ENCODE measurements at regions of chr7 and their contacts with region 1.

Region 1: DNA sequence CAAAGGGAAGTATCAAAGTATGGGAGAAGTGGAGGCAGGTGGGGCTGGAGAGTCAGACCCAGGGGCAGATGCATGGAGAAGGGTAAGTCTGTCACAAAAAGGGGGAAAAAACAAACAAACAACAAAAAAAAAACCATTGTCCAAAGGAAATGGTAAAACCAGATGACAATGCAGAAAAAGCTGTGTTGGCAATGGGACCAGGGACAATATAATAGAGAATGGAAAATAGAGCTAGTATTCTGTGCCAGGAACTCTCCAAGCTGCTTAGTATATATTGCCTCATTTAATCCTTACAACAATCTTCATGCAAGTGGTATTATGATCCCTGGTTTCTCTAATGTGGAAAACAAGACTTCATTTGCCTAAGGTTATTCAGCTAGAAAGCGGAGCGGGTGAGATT is 13.1 kb upstream of the KDM7A start:
- DNase-seq: no peak
- ATAC-seq: no peak
- H3K4me3 ChIP-seq: no peak overlapping the region
- H3K27ac ChIP-seq: no peak overlapping the region
- H3K4me1 ChIP-seq: no peaks in the 10 kb centered on the region
- H3K27me3 ChIP-seq: no peaks in the 10 kb centered on the region
- CTCF ChIP-seq: no peak
- POLR2A ChIP-seq: no peak

Region 2: DNA sequence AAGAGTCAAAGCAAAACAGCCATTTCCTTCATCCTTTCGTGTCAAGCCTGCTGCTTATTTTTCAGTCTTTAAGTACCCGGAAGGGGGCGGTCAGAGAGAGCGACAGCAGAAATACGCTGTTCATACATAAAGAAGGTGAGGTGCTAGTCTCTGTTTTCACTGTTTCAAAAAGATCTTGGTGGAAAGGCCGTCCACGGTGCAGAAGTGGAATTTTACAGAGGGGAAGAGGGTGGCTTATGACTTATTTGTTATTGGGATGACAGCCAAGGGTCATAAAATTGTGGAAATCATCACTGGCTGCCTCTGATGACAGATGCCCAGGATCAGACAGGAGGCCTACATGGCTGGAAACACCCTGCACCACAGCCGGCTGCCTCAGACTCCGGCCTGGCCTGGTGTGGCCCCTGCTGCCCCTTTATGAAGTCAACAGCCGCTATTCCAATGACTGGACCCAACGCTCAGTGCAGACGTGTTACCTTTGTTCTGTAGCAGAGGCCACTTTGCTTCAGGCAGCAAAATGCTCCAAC is 469.1 kb before region 1 on chr7:
- intact Hi-C with region 1: no loop called
- DNase-seq: peak in 1 of 4 donors; percentile 42
- ATAC-seq: peak; percentile 54
- H3K4me3 ChIP-seq: no peak overlapping the region
- H3K27ac ChIP-seq: peak overlapping the region in 2 of 4 donors; percentile 46 to 50
- H3K4me1 ChIP-seq: peaks cover 36% of the 10 kb centered on the region
- H3K27me3 ChIP-seq: no peaks in the 10 kb centered on the region
- CTCF ChIP-seq: no peak
- POLR2A ChIP-seq: no peak

Region 3: DNA sequence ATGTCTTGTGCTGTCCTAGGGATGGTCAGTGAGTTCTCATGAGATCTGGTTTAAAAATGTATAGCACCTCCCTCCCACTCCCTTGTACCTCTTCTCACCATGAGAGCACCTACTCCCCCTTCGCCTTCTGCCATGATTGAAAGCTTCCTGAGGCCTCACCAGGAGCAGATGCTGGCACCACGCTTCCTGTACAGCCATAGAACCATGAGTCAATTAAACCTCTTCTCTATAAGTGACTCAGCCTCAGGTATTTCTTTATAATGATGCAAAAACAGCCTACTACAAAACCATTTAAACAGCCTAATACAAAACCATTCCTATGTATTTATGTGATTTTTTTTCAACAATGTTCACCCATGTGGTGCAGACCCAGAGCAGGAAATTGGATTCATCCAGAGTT is 45.1 kb before region 1 on chr7:
- intact Hi-C with region 1: no loop called
- DNase-seq: no peak
- ATAC-seq: no peak
- H3K4me3 ChIP-seq: no peak overlapping the region
- H3K27ac ChIP-seq: no peak overlapping the region
- H3K4me1 ChIP-seq: peaks cover 3% of the 10 kb centered on the region
- H3K27me3 ChIP-seq: no peaks in the 10 kb centered on the region
- CTCF ChIP-seq: no peak
- POLR2A ChIP-seq: no peak

Region 4: DNA sequence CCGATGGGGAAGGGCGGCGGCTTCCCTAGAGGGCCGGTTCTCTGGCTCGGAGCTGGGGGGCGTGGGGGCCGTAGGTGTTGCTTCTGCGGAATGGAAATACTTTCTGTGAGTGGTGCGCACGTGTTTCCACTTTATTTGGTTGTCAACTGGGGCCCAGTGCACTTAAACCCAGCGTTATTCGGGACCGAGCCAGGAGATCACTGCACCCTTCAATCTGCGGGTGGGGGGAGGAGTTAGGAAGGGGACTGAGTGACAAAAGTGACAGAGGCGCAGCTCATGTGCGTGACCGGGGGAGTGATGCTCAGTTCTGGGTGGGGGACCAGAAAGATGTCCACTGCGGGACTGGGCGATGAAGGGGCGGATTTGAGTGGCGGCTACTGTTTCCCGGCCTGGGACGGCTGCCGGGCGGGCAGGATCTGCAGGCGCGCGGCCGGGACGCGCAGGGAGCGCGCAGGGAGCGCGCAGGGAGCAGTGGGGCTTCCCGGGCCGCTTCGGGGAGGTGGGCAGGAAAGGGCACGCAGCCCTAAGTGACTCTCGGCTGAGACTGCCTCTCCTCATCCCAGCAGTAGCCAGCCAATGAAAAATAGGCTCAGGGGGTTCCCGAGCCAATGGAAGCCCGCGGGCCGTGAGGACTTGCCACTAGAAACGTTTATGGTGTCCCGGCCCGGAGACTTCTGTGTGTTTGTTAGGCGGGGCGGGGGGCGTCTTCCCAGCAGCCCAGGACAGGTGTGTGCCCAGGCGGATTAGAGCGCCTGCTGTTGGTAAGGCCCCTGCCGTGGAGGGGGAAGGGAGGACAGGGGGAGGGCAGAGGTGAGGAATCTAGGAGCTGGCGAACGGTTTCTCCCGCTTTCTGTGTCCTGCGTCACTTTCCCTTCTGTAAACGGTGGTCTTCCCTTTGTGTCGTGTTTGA is 41.2 kb after region 1 on chr7:
- intact Hi-C with region 1: loop called (anchors 10 kb)
- DNase-seq: peak; percentile 52 to 66 (median 61)
- ATAC-seq: peak; percentile 79
- H3K4me3 ChIP-seq: peak overlapping the region; percentile 19 to 34
- H3K27ac ChIP-seq: no peak overlapping the region
- H3K4me1 ChIP-seq: peaks cover 20% of the 10 kb centered on the region
- H3K27me3 ChIP-seq: no peaks in the 10 kb centered on the region
- CTCF ChIP-seq: no peak
- POLR2A ChIP-seq: peak in 1 of 3 donors; percentile 21